ENCODE measurements at regions of chr15 and their contacts with region 1.

Region 1: DNA sequence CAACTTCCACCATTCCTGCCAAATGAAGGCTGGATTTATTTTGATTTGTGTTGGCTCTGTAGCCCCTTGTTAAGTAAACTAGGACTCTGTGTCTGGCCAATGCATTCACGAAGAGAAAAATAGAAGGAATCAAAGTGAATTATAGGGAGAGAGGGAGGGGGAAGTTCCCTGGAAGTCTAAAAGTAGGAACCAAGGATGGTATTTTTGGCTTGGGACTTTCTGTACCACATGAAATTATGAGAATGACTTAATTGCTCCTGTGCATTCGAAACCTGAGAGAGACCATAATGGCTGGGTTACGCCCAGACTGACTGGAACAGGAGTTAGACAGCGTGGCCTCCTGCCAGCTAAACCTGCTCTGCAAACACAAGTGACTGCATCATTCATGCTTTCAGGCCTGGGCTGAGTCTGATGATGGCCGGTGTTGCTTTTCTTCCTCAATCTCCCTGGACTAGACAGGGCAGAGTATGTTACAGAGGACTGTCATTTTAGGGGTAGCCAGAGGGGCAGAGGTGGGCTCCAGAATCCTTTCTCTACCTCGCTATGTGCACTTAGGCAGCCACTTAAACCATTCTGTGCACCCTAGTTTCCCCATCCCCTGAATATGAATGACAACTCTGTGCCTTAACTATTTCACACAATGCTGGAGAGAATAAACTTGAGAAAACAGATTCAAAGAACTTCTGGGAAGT is 58.9 kb downstream of the MYO1E start:
- DNase-seq: peak; percentile 72 to 76
- ATAC-seq: peak; percentile 83 to 88
- H3K4me3 ChIP-seq: no peak overlapping the region
- H3K27ac ChIP-seq: peak overlapping the region; percentile 29 to 73 (median 48)
- H3K4me1 ChIP-seq: peaks cover 23 to 41% of the 10 kb centered on the region in 2 donors
- H3K27me3 ChIP-seq: no peaks in the 10 kb centered on the region
- CTCF ChIP-seq: no peak
- POLR2A ChIP-seq: no peak

Region 2: GRCh38 chr15:58066042-58066867 is 1247.5 kb before region 1 on chr15:
- in situ Hi-C with region 1: no loop called
- intact Hi-C with region 1: no loop called
- DNase-seq: peak; percentile 19 to 31
- ATAC-seq: peak; percentile 74 to 83
- H3K4me3 ChIP-seq: peak overlapping the region; percentile 54 to 62 (median 55)
- H3K27ac ChIP-seq: peak overlapping the region; percentile 4 to 51 (median 50)
- H3K4me1 ChIP-seq: peaks cover 0 to 7% of the 10 kb centered on the region in 2 donors
- H3K27me3 ChIP-seq: peaks cover 36 to 47% (median 41%) of the 10 kb centered on the region in 3 donors
- CTCF ChIP-seq: peak; percentile 28 to 81 (median 69)
- POLR2A ChIP-seq: peak in 1 of 2 donors; percentile 2

Region 3: GRCh38 chr15:59349680-59350420 is 36.1 kb after region 1 on chr15:
- in situ Hi-C with region 1: no loop called
- intact Hi-C with region 1: loop called (anchors 5 kb)
- DNase-seq: no peak
- ATAC-seq: peak; percentile 90
- H3K4me3 ChIP-seq: no peak overlapping the region
- H3K27ac ChIP-seq: peak overlapping the region; percentile 45 to 72 (median 56)
- H3K4me1 ChIP-seq: peaks cover 17 to 38% of the 10 kb centered on the region in 2 donors
- H3K27me3 ChIP-seq: no peaks in the 10 kb centered on the region
- CTCF ChIP-seq: no peak
- POLR2A ChIP-seq: no peak

Measured in gastrocnemius medialis (tissue), 4 donors.